Mammary epithelial cell (primary cell): ENCODE measurements at regions of chr1 and their contacts with region 1.

Region 1: GRCh38 chr1:183471743-183472487 is 384 bp upstream of the SMG7 start:
- DNase-seq: peak; percentile 96
- H3K4me3 ChIP-seq: peak overlapping the region; percentile 88 to 99 (median 99)
- H3K27ac ChIP-seq: peak overlapping the region; percentile 96
- H3K4me1 ChIP-seq: peaks cover 25% of the 10 kb centered on the region
- H3K27me3 ChIP-seq: no peaks in the 10 kb centered on the region
- CTCF ChIP-seq: no peak

Region 2: GRCh38 chr1:183124259-183124658 is 347.7 kb before region 1 on chr1:
- CTCF ChIA-PET with region 1: no interaction called
- dilution Hi-C with region 1: no loop called
- in situ Hi-C with region 1: no loop called
- intact Hi-C with region 1: no loop called
- DNase-seq: no peak
- H3K4me3 ChIP-seq: no peak overlapping the region
- H3K27ac ChIP-seq: no peak overlapping the region
- H3K4me1 ChIP-seq: no peaks in the 10 kb centered on the region
- H3K27me3 ChIP-seq: no peaks in the 10 kb centered on the region
- CTCF ChIP-seq: no peak

Region 3: GRCh38 chr1:183209533-183210158 is 262.3 kb before region 1 on chr1:
- CTCF ChIA-PET with region 1: no interaction called
- dilution Hi-C with region 1: no loop called
- in situ Hi-C with region 1: no loop called
- intact Hi-C with region 1: no loop called
- DNase-seq: peak; percentile 87
- H3K4me3 ChIP-seq: no peak overlapping the region
- H3K27ac ChIP-seq: peak overlapping the region; percentile 63
- H3K4me1 ChIP-seq: peaks cover 43% of the 10 kb centered on the region
- H3K27me3 ChIP-seq: no peaks in the 10 kb centered on the region
- CTCF ChIP-seq: no peak

Region 4: DNA sequence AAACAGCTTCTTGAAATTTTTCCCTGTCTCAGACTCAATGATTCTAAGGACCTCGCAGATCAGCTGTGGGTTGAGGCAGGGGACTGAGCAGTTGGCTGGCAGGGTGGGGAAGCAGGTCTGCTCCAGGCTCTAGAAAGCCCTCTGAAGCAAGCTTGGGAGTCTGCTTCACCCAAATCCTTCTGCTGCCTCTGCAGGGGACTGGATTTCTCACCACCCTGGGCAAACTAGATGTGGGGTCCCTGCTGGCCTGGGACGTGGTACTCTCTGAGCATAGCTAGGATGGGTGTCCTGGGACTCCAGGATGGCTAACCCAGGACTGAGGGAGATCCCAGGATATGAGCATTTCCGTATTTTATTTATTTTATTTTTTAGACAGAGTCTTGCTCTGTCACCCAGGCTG is 196.6 kb before region 1 on chr1:
- CTCF ChIA-PET with region 1: no interaction called
- dilution Hi-C with region 1: no loop called
- in situ Hi-C with region 1: no loop called
- intact Hi-C with region 1: no loop called
- DNase-seq: no peak
- H3K4me3 ChIP-seq: no peak overlapping the region
- H3K27ac ChIP-seq: no peak overlapping the region
- H3K4me1 ChIP-seq: peaks cover 61% of the 10 kb centered on the region
- H3K27me3 ChIP-seq: no peaks in the 10 kb centered on the region
- CTCF ChIP-seq: no peak

Region 5: GRCh38 chr1:183370399-183371058 is 101.4 kb before region 1 on chr1:
- CTCF ChIA-PET with region 1: no interaction called
- dilution Hi-C with region 1: loop called (anchors 5 kb)
- in situ Hi-C with region 1: no loop called
- intact Hi-C with region 1: no loop called
- DNase-seq: no peak
- H3K4me3 ChIP-seq: no peak overlapping the region
- H3K27ac ChIP-seq: no peak overlapping the region
- H3K4me1 ChIP-seq: no peaks in the 10 kb centered on the region
- H3K27me3 ChIP-seq: peaks cover 2% of the 10 kb centered on the region
- CTCF ChIP-seq: no peak

Region 6: GRCh38 chr1:183515018-183515689 is 43.2 kb after region 1 on chr1:
- CTCF ChIA-PET with region 1: no interaction called
- dilution Hi-C with region 1: no loop called
- in situ Hi-C with region 1: no loop called
- intact Hi-C with region 1: loop called (anchors 1 kb)
- DNase-seq: peak; percentile 87
- H3K4me3 ChIP-seq: no peak overlapping the region
- H3K27ac ChIP-seq: peak overlapping the region; percentile 50
- H3K4me1 ChIP-seq: peaks cover 33% of the 10 kb centered on the region
- H3K27me3 ChIP-seq: no peaks in the 10 kb centered on the region
- CTCF ChIP-seq: no peak

Region 7: GRCh38 chr1:183543619-183544204 is 71.8 kb after region 1 on chr1:
- CTCF ChIA-PET with region 1: no interaction called
- dilution Hi-C with region 1: no loop called
- in situ Hi-C with region 1: no loop called
- intact Hi-C with region 1: loop called (anchors 1 kb)
- DNase-seq: peak; percentile 55
- H3K4me3 ChIP-seq: no peak overlapping the region
- H3K27ac ChIP-seq: no peak overlapping the region
- H3K4me1 ChIP-seq: no peaks in the 10 kb centered on the region
- H3K27me3 ChIP-seq: no peaks in the 10 kb centered on the region
- CTCF ChIP-seq: peak; percentile 75 to 78

Region 8: DNA sequence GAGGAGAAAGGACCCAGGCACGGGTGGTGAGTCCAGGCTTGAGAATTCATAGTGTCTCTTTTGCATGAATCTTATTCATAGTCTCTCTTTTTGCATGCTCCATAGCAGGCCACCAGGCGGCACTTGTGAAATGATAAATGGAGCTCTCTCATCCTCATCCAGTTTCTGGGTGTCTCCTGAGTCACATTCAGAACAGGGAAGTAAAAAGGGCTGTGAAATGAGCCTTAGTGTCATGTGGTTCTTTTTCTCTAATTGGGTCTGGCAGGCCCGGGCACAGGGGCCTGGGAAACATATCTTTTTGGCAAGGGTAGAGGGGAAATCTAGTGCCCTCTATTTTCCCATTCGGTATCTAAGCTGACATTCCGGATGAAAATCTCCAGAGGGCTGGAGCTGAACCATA is 137.4 kb after region 1 on chr1:
- CTCF ChIA-PET with region 1: no interaction called
- dilution Hi-C with region 1: no loop called
- in situ Hi-C with region 1: no loop called
- intact Hi-C with region 1: loop called (anchors 2 kb)
- DNase-seq: peak; percentile 69
- H3K4me3 ChIP-seq: no peak overlapping the region
- H3K27ac ChIP-seq: peak overlapping the region; percentile 83
- H3K4me1 ChIP-seq: peaks cover 35% of the 10 kb centered on the region
- H3K27me3 ChIP-seq: no peaks in the 10 kb centered on the region
- CTCF ChIP-seq: peak; percentile 24 to 48

Region 9: DNA sequence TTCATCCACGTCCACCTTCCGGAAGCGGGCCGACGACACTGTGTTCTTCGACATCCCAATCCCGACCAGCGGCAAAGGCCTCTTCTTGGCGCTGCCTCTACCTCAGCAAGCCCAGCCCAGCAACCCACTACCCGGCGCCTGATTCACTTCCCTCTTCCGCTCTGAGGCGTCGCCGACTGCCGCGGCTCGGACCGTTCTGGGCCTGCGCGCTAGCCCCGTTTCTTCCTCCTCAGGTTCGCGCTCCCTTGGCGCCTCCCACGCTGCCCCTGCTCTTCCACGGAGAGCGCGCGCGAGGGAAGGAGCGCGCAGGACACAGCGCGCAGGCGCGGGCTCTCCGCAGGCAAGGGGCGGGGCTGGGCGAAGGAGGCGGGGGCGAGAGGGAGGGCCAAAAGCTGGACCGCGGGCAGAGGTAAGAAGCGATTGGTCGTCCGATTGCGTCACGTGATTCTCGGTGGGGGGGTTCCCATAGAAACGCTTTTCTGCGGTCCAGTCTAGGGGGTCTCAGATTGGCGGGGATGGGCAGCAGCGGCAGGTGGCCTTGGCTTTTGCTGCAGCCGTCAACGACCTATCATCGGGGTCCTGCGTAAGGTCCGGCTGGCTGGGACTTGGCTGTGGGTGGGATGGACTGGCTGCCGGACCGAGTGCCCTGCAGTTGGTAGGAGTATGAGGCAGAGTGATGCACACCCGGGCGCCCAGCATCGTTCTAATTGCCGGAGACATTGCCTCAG is 163.9 kb after region 1 on chr1 and contains the start of gene ARPC5:
- CTCF ChIA-PET with region 1: no interaction called
- dilution Hi-C with region 1: no loop called
- in situ Hi-C with region 1: loop called in 1 of 2 experiments (anchors 5 kb)
- intact Hi-C with region 1: loop called (anchors 1 kb)
- DNase-seq: peak; percentile 99
- H3K4me3 ChIP-seq: peak within 1 kb of the TSS; percentile 85 to 95 (median 90)
- H3K27ac ChIP-seq: peak within 1 kb of the TSS; percentile 82
- H3K4me1 ChIP-seq: peaks cover 25% of the 10 kb centered on the region
- H3K27me3 ChIP-seq: no peaks in the 10 kb centered on the region
- CTCF ChIP-seq: no peak
- total RNA-seq, gene ARPC5: 162 to 186 TPM

Region 10: DNA sequence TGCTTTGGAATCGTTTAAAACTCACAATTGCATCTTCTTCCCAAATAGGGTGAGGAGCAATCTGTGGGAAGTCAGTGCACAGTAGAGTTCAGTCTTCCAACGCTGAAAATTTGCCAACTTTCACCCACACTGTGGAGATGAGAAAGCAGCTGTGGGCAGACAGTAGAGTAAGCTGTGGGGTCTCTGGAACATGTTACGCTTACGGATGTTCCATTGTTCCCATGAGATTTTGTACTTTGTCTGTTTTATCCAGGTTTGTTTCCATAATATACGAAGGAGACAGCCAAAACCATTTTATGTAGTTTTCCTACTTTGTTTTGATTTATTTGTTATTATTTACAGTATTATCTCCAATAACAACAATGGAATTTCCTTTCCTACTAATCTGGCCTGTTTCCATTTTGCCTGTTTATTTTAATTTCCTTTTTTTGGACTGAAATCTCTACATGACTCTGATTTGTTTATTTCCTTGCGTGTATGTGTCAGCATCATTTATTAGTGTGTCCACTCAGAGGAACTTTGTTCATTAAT is 267.9 kb after region 1 on chr1:
- CTCF ChIA-PET with region 1: no interaction called
- dilution Hi-C with region 1: no loop called
- in situ Hi-C with region 1: no loop called
- intact Hi-C with region 1: no loop called
- DNase-seq: no peak
- H3K4me3 ChIP-seq: no peak overlapping the region
- H3K27ac ChIP-seq: no peak overlapping the region
- H3K4me1 ChIP-seq: no peaks in the 10 kb centered on the region
- H3K27me3 ChIP-seq: no peaks in the 10 kb centered on the region
- CTCF ChIP-seq: no peak